IMR-90 (cell line): ENCODE measurements at regions of chr2 and their contacts with region 1.

Region 1: GRCh38 chr2:230230087-230230486 is 4.6 kb downstream of the SP140 start:
- DNase-seq: peak; percentile 90
- ATAC-seq: peak; percentile 44; the same call in 1 of the 2 replicates
- H3K4me3 ChIP-seq: no peak overlapping the region
- H3K27ac ChIP-seq: no peak overlapping the region
- H3K4me1 ChIP-seq: no peaks in the 10 kb centered on the region; the same call in 1 of the 2 replicates
- H3K27me3 ChIP-seq: no peaks in the 10 kb centered on the region
- CTCF ChIP-seq: no peak
- POLR2A ChIP-seq: no peak
- RAD21 ChIP-seq: no peak

Region 2: GRCh38 chr2:230457073-230457768 is 227.1 kb after region 1 on chr2:
- CTCF ChIA-PET with region 1: no interaction called
- POLR2A ChIA-PET with region 1: no interaction called
- dilution Hi-C with region 1: no loop called
- in situ Hi-C with region 1: no loop called
- intact Hi-C with region 1: loop called (anchors 10 kb)
- DNase-seq: no peak
- ATAC-seq: no peak
- H3K4me3 ChIP-seq: no peak overlapping the region
- H3K27ac ChIP-seq: no peak overlapping the region
- H3K4me1 ChIP-seq: no peaks in the 10 kb centered on the region
- H3K27me3 ChIP-seq: no peaks in the 10 kb centered on the region
- CTCF ChIP-seq: no peak
- POLR2A ChIP-seq: no peak
- RAD21 ChIP-seq: no peak

Region 3: GRCh38 chr2:230712443-230713330 is 482.6 kb after region 1 on chr2 and contains the start of gene CAB39:
- CTCF ChIA-PET with region 1: no interaction called
- POLR2A ChIA-PET with region 1: no interaction called
- dilution Hi-C with region 1: no loop called
- in situ Hi-C with region 1: no loop called
- intact Hi-C with region 1: no loop called
- DNase-seq: peak; percentile 86
- ATAC-seq: peak; percentile 93
- H3K4me3 ChIP-seq: peak within 1 kb of the TSS; percentile 65
- H3K27ac ChIP-seq: peak within 1 kb of the TSS; percentile 91
- H3K4me1 ChIP-seq: peaks cover 10% of the 10 kb centered on the region
- H3K27me3 ChIP-seq: no peaks in the 10 kb centered on the region; the same call in 1 of the 2 replicates
- CTCF ChIP-seq: peak; percentile 97
- POLR2A ChIP-seq: peak; percentile 87
- RAD21 ChIP-seq: peak; percentile 61
- total RNA-seq, gene CAB39: 71.7 and 95.3 TPM in 2 replicates